H1 (cell line): ENCODE measurements at regions of chr4 and their contacts with region 1.

Region 1: DNA sequence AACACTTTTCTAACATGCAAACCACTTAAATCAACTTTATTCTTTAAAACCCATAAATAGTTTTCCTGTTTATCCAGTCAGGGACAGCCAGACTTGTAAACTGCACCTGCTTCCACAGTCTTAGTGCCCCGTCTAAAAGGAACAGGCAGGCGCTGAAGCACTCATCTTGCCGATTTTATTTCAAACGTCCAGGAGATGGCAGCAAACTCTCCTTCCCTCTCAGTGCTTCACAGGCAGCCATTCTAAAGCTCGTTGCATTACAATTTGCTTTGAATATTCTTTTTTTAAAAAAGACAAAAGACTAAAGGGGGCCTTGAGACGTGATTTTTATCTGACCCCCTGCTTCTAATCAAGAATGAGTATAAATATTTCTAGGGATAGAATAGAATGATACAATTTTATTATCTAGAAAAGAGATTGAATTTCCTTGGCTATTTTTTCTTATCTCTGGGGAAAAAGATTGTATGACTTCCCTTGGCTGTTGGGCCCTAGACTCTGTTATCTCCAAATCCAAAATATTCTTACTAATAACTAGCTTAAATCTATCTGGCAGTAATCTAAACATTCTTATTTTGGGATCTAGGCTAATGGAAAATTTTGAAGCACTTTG is 93.6 kb upstream of the MYOZ2 start:
- DNase-seq: peak in 1 of 2 experiments; percentile 53
- H3K4me3 ChIP-seq: no peak overlapping the region
- H3K27ac ChIP-seq: no peak overlapping the region
- H3K4me1 ChIP-seq: peaks cover 0 to 7% (median 1%) of the 10 kb centered on the region in 4 experiments; a peak in 6 of 7 replicates
- H3K27me3 ChIP-seq: no peaks in the 10 kb centered on the region
- CTCF ChIP-seq: peak; percentile 18 to 67 (median 66)
- EP300 ChIP-seq: no peak
- POLR2A ChIP-seq: no peak
- RAD21 ChIP-seq: peak; percentile 77 to 83

Region 2: DNA sequence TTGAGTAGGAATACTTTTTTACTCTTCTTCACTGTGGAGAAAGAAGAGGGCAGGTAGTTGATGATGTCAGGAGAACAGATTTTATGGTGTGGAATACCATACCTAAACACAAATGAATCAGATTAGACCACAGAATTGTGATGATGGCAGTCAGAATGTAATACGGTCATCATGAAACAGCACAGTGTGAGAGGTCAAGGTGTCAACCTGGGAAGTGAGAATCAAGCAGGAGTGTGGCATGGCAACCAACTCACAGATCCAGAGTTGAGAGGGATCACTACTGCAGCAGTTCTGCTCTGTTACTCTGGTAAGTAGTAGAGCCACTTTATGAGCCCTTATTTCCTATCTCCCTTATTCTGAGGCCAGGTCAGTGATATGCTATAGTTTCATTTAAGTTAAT is 329.2 kb before region 1 on chr4:
- CTCF ChIA-PET with region 1: no interaction called
- POLR2A ChIA-PET with region 1: no interaction called
- DNase-seq: no peak
- H3K4me3 ChIP-seq: no peak overlapping the region
- H3K27ac ChIP-seq: no peak overlapping the region
- H3K4me1 ChIP-seq: no peaks in the 10 kb centered on the region
- H3K27me3 ChIP-seq: peaks cover 0 to 1% (median 0%) of the 10 kb centered on the region in 4 experiments; a peak in 1 of 7 replicates
- CTCF ChIP-seq: no peak
- EP300 ChIP-seq: no peak
- POLR2A ChIP-seq: no peak
- RAD21 ChIP-seq: no peak

Region 3: GRCh38 chr4:118981839-118982381 is 60.1 kb before region 1 on chr4:
- CTCF ChIA-PET with region 1: interaction called, 42 read pairs
- POLR2A ChIA-PET with region 1: no interaction called
- DNase-seq: peak in 1 of 2 experiments; percentile 56
- H3K4me3 ChIP-seq: no peak overlapping the region
- H3K27ac ChIP-seq: no peak overlapping the region
- H3K4me1 ChIP-seq: peaks cover 0 to 9% (median 0%) of the 10 kb centered on the region in 4 experiments; a peak in 2 of 7 replicates
- H3K27me3 ChIP-seq: no peaks in the 10 kb centered on the region
- CTCF ChIP-seq: peak in 2 of 3 experiments; percentile 73 to 74; a peak in 3 of 4 replicates
- EP300 ChIP-seq: no peak
- POLR2A ChIP-seq: no peak
- RAD21 ChIP-seq: peak; percentile 95 to 96

Region 4: DNA sequence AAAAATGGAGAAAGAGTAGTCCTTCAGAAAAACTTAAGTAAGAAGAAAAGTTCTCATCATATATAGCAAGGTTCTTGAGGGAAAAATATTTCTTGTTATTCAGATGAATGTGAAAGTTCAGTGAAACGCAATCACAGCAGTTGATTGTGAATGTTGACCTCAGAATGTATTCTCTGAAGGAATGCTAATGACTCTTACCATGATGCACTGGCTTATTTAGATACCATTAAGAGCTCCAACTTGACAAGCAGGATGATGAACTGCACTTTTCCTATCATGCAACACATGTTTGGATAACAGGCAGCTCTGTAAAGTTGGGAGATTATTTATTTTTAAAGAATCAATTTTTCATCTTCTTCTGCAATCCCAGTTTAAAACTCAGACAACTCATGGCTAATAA is 21.9 kb before region 1 on chr4:
- CTCF ChIA-PET with region 1: interaction called, 20 read pairs
- POLR2A ChIA-PET with region 1: no interaction called
- DNase-seq: no peak
- H3K4me3 ChIP-seq: no peak overlapping the region
- H3K27ac ChIP-seq: no peak overlapping the region
- H3K4me1 ChIP-seq: peaks cover 0 to 5% (median 3%) of the 10 kb centered on the region in 4 experiments; a peak in 3 of 7 replicates
- H3K27me3 ChIP-seq: no peaks in the 10 kb centered on the region
- CTCF ChIP-seq: no peak
- EP300 ChIP-seq: no peak
- POLR2A ChIP-seq: no peak
- RAD21 ChIP-seq: no peak

Region 5: GRCh38 chr4:119031218-119031617 is 10.8 kb before region 1 on chr4:
- CTCF ChIA-PET with region 1: interaction called, 33 read pairs
- POLR2A ChIA-PET with region 1: interaction called, 4 read pairs
- DNase-seq: no peak
- H3K4me3 ChIP-seq: no peak overlapping the region
- H3K27ac ChIP-seq: no peak overlapping the region
- H3K4me1 ChIP-seq: no peaks in the 10 kb centered on the region; a peak in 2 of 7 replicates
- H3K27me3 ChIP-seq: no peaks in the 10 kb centered on the region
- CTCF ChIP-seq: no peak
- EP300 ChIP-seq: no peak
- POLR2A ChIP-seq: no peak
- RAD21 ChIP-seq: no peak

Region 6: DNA sequence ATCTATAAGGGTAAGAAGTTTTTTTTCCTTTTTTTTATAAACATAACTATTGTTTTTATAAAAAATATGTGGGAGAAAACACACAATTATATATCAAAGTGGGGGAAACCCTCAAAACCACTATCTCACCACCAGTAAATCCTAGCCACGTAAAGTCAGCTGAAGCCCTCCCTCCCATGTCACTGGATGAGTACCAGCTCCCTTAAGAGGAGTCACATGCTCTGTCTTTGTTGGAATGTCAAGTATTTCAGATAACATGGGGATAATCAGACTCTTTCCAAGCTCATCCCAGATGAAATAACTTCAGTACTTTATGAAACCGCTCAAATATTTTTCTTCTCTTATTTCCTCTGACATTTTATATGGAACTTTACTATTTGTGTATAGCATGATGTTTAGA is 96.0 kb after region 1 on chr4:
- CTCF ChIA-PET with region 1: interaction called, 12 read pairs
- POLR2A ChIA-PET with region 1: no interaction called
- DNase-seq: no peak
- H3K4me3 ChIP-seq: no peak overlapping the region
- H3K27ac ChIP-seq: no peak overlapping the region
- H3K4me1 ChIP-seq: no peaks in the 10 kb centered on the region
- H3K27me3 ChIP-seq: peaks cover 0 to 1% (median 0%) of the 10 kb centered on the region in 4 experiments; a peak in 1 of 7 replicates
- CTCF ChIP-seq: no peak
- EP300 ChIP-seq: no peak
- POLR2A ChIP-seq: no peak
- RAD21 ChIP-seq: no peak